CD4-positive, alpha-beta memory T cell (primary cell): ENCODE measurements at regions of chr22 and their contacts with region 1.

Region 1: GRCh38 chr22:41780746-41781505 is 19.6 kb upstream of the CCDC134 start:
- DNase-seq: peak; percentile 90 to 99 (median 95)
- H3K4me3 ChIP-seq: peak overlapping the region; percentile 88 to 92
- H3K4me3 Mint-ChIP-seq: peak overlapping the region; percentile 88 to 94 (median 90)
- H3K27ac ChIP-seq: peak overlapping the region; percentile 90
- H3K27ac Mint-ChIP-seq: peak overlapping the region; percentile 92 to 100 (median 99)
- H3K4me1 ChIP-seq: peaks cover 50% of the 10 kb centered on the region
- H3K4me1 Mint-ChIP-seq: peaks cover 29 to 53% (median 40%) of the 10 kb centered on the region in 4 donors
- H3K27me3 ChIP-seq: no peaks in the 10 kb centered on the region
- H3K27me3 Mint-ChIP-seq: no peaks in the 10 kb centered on the region

Region 2: GRCh38 chr22:41688365-41689211 is 92.3 kb before region 1 on chr22 and contains the start of gene SNU13:
- CTCF ChIA-PET with region 1: no interaction called
- POLR2A ChIA-PET with region 1: interaction called, 27 read pairs
- intact Hi-C with region 1: loop called (anchors 2 kb)
- DNase-seq: peak; percentile 91 to 95 (median 92)
- H3K4me3 ChIP-seq: peak within 1 kb of the TSS; percentile 75 to 96
- H3K4me3 Mint-ChIP-seq: peak within 1 kb of the TSS; percentile 94 to 99 (median 97)
- H3K27ac ChIP-seq: peak within 1 kb of the TSS; percentile 95
- H3K27ac Mint-ChIP-seq: peak within 1 kb of the TSS; percentile 95 to 99 (median 98)
- H3K4me1 ChIP-seq: peaks cover 37% of the 10 kb centered on the region
- H3K4me1 Mint-ChIP-seq: peaks cover 21 to 48% (median 33%) of the 10 kb centered on the region in 4 donors
- H3K27me3 ChIP-seq: no peaks in the 10 kb centered on the region
- H3K27me3 Mint-ChIP-seq: no peaks in the 10 kb centered on the region
- total RNA-seq, gene SNU13: 123 to 129 TPM

Region 3: DNA sequence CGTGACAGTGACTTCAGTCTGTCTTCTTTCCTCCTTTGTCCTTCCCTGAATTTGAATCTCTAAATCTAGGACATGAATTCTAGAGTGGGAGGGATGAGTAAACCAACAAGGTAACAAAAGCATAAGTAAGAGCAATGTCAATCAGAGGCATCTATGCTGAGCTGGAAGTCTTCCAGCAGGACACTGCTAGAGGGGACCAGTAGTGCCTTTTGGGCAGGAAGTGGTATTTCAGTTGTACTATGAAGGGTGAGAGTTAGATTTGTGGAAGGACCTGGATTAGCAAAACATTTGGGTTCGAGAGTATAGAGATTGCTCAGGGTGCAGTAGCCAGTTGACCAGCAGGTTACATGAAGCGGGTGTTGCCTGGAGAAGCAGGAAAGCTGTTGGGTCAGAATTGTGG is 41.4 kb before region 1 on chr22:
- CTCF ChIA-PET with region 1: no interaction called
- POLR2A ChIA-PET with region 1: no interaction called
- intact Hi-C with region 1: no loop called
- DNase-seq: no peak
- H3K4me3 ChIP-seq: no peak overlapping the region
- H3K4me3 Mint-ChIP-seq: no peak overlapping the region
- H3K27ac ChIP-seq: no peak overlapping the region
- H3K27ac Mint-ChIP-seq: peak overlapping the region in 2 of 7 donors; percentile 5 to 38
- H3K4me1 ChIP-seq: no peaks in the 10 kb centered on the region
- H3K4me1 Mint-ChIP-seq: no peaks in the 10 kb centered on the region
- H3K27me3 ChIP-seq: no peaks in the 10 kb centered on the region
- H3K27me3 Mint-ChIP-seq: peaks cover 0 to 2% of the 10 kb centered on the region in 2 donors

Region 4: DNA sequence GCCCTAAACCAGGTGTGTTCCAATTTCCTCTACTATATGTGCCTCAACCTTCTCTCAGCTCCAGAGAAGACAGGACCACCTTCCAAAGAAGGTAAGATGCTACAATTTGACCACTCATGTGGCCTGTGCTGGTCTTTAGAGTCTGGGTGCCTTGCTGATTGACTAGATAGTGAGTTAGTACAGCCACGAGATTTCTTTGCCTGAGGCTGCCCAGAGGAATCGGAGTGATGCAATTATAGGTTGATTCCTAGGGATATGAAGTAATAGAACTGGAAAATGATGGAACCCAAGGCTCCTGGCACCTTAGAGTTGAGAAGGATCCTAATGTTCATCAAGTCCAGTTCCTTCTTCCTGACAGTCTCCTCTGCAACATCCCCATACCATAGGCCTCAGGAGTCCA is 27.0 kb before region 1 on chr22:
- CTCF ChIA-PET with region 1: no interaction called
- POLR2A ChIA-PET with region 1: no interaction called
- intact Hi-C with region 1: no loop called
- DNase-seq: no peak
- H3K4me3 ChIP-seq: no peak overlapping the region
- H3K4me3 Mint-ChIP-seq: no peak overlapping the region
- H3K27ac ChIP-seq: no peak overlapping the region
- H3K27ac Mint-ChIP-seq: no peak overlapping the region
- H3K4me1 ChIP-seq: no peaks in the 10 kb centered on the region
- H3K4me1 Mint-ChIP-seq: no peaks in the 10 kb centered on the region
- H3K27me3 ChIP-seq: no peaks in the 10 kb centered on the region
- H3K27me3 Mint-ChIP-seq: peaks cover 0 to 2% of the 10 kb centered on the region in 2 donors

Region 5: GRCh38 chr22:41768430-41768829 is 12.5 kb before region 1 on chr22:
- CTCF ChIA-PET with region 1: interaction called, 6 read pairs
- POLR2A ChIA-PET with region 1: interaction called, 14 read pairs
- intact Hi-C with region 1: no loop called
- DNase-seq: no peak
- H3K4me3 ChIP-seq: no peak overlapping the region
- H3K4me3 Mint-ChIP-seq: no peak overlapping the region
- H3K27ac ChIP-seq: no peak overlapping the region
- H3K27ac Mint-ChIP-seq: no peak overlapping the region
- H3K4me1 ChIP-seq: no peaks in the 10 kb centered on the region
- H3K4me1 Mint-ChIP-seq: no peaks in the 10 kb centered on the region
- H3K27me3 ChIP-seq: no peaks in the 10 kb centered on the region
- H3K27me3 Mint-ChIP-seq: no peaks in the 10 kb centered on the region

Region 6: DNA sequence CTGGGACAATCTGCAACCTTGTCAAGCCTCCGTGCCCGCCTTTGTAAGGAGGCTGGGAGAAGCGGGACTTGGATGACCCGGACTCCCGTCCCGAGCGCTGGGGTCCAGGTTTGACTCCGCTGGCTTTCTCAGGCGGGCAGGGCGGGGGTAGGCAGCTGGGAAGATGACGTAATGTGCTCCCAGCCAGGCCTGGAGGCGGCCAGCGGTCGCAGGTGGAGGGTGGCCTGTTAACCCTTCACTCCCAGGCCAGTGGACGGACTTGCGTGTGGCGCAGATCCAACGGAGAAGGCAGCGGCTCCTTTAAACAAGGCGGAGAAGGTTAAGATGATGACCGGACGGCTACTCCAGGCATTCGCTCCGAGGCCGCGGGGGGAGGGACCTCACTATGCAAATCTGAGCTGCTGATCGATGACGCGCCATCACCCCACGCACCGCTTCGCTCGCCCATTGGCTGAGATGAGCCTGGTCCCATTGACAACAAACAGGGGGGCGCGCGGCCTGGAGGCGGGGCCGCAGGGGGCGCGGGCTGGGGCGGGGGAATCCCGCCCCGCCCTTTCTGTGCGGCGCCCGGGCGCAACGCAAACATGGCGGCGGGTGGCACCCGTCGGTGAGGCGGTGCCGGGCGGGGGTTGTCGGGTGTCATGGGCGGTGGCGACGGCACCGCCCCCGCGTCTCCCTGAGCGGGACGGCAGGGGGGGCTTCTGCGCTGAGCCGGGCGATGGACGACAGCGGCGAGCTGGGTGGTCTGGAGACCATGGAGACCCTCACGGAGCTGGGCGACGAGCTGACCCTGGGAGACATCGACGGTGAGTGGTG is 51.8 kb after region 1 on chr22 and contains the start of gene SREBF2:
- CTCF ChIA-PET with region 1: interaction called, 5 read pairs
- POLR2A ChIA-PET with region 1: interaction called, 76 read pairs
- intact Hi-C with region 1: no loop called
- DNase-seq: peak; percentile 97 to 99 (median 98)
- H3K4me3 ChIP-seq: peak within 1 kb of the TSS; percentile 36 to 93
- H3K4me3 Mint-ChIP-seq: peak within 1 kb of the TSS; percentile 92 to 97 (median 95)
- H3K27ac ChIP-seq: peak within 1 kb of the TSS; percentile 84
- H3K27ac Mint-ChIP-seq: peak within 1 kb of the TSS; percentile 98 to 100 (median 99)
- H3K4me1 ChIP-seq: peaks cover 26% of the 10 kb centered on the region
- H3K4me1 Mint-ChIP-seq: peaks cover 21 to 46% (median 31%) of the 10 kb centered on the region in 4 donors
- H3K27me3 ChIP-seq: no peaks in the 10 kb centered on the region
- H3K27me3 Mint-ChIP-seq: no peaks in the 10 kb centered on the region
- total RNA-seq, gene SREBF2: 109 to 112 TPM

Region 7: DNA sequence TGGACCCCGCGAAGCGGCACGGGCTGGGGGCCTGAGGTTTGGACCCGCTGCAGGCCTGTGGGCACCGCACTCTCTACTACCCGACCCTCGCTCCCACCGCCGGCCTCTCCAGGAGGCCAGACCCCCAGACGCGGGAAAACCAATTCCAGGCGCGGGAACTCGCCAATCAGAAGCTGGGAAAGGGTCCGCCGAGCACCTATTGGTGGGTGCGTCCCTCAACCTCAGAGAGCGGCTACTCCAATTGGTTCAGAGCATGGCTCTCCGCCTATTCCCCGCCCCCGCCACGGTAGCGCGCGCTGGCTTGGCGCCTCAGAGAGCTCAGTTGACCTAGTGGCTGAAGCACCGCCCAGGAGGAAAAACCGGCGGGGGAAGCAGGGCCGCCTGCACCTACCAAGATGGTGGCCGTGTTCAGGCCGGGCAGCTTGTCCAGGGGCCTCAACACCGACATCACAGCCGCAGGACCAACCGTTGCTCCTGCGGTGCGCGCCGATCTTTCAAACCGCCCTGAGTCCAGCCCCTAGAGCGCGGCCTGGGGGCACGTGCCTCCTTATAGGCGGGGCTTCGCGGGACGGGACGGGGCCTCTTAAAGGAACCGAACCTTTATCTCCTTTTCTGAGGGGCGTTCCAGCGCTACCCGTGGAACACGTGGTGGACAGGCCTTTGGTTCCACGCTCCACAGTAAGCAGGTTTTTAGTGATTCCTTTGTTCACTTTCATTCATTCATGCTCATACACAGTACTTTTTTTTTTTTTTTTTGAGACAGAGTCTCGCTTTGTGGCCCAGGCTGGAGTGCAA is 165.9 kb after region 1 on chr22 and contains the start of gene CENPM:
- CTCF ChIA-PET with region 1: interaction called, 4 read pairs
- POLR2A ChIA-PET with region 1: interaction called, 10 read pairs
- intact Hi-C with region 1: no loop called
- DNase-seq: peak; percentile 84 to 88 (median 86)
- H3K4me3 ChIP-seq: peak within 1 kb of the TSS; percentile 84 to 87
- H3K4me3 Mint-ChIP-seq: peak within 1 kb of the TSS; percentile 89 to 97 (median 92)
- H3K27ac ChIP-seq: peak within 1 kb of the TSS; percentile 53
- H3K27ac Mint-ChIP-seq: peak within 1 kb of the TSS; percentile 82 to 94 (median 89)
- H3K4me1 ChIP-seq: peaks cover 14% of the 10 kb centered on the region
- H3K4me1 Mint-ChIP-seq: peaks cover 4 to 29% (median 12%) of the 10 kb centered on the region in 4 donors
- H3K27me3 ChIP-seq: no peaks in the 10 kb centered on the region
- H3K27me3 Mint-ChIP-seq: no peaks in the 10 kb centered on the region
- total RNA-seq, gene CENPM: 7.6 to 12.0 TPM